ENCODE measurements at regions of chr20 and their contacts with region 1.

Region 1: DNA sequence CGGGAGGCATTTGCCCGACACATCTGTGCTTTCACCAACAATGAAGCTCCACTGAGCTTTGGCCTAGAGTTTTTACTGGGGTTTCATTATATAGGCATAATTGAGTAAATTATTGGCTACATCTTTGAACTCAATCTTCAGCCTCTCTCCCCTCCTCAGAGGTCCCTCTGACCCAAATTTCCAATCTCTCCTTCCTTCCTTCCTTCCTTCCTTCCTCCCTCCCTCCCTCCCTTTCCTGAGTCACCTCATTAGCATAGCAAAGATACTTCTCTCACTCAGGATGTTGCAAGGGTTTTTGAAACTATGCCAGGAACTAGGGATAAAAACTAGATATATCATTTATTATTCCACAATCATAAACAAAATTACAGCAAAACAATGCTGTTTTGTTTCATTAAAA is 238.2 kb upstream of the PRND start:
- DNase-seq: no peak
- H3K4me3 ChIP-seq: no peak overlapping the region
- CTCF ChIP-seq: no peak

Region 2: GRCh38 chr20:4256874-4257273 is 226.6 kb before region 1 on chr20:
- in situ Hi-C with region 1: loop called (anchors 5 kb)
- DNase-seq: no peak
- H3K4me3 ChIP-seq: no peak overlapping the region
- CTCF ChIP-seq: no peak

Region 3: GRCh38 chr20:4569092-4569491 is 85.6 kb after region 1 on chr20:
- in situ Hi-C with region 1: loop called (anchors 5 kb)
- DNase-seq: no peak
- H3K4me3 ChIP-seq: no peak overlapping the region
- CTCF ChIP-seq: no peak

Region 4: DNA sequence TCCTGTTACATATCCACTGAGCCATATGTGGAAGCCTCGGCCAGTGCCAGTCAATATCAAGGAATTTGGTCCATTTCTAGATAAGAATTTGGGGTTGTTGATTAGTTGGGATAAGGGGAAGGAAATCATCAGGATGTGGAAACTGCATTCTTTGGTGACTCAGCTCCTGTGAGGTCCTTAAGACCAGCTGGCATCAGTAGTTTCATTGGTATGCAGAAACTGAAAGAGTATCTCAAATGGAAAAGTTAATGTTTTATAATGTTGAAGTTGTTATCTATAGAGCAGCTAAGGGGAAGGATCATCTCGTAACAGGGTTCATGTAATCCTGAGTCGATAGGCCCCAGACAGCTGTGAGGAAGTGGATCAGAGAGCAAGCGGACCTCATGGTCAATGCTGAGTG is 150.3 kb after region 1 on chr20:
- in situ Hi-C with region 1: no loop called
- DNase-seq: peak; percentile 53
- H3K4me3 ChIP-seq: no peak overlapping the region
- CTCF ChIP-seq: no peak